Endothelial cell of umbilical vein (primary cell): ENCODE measurements at regions of chr22 and their contacts with region 1.

Region 1: DNA sequence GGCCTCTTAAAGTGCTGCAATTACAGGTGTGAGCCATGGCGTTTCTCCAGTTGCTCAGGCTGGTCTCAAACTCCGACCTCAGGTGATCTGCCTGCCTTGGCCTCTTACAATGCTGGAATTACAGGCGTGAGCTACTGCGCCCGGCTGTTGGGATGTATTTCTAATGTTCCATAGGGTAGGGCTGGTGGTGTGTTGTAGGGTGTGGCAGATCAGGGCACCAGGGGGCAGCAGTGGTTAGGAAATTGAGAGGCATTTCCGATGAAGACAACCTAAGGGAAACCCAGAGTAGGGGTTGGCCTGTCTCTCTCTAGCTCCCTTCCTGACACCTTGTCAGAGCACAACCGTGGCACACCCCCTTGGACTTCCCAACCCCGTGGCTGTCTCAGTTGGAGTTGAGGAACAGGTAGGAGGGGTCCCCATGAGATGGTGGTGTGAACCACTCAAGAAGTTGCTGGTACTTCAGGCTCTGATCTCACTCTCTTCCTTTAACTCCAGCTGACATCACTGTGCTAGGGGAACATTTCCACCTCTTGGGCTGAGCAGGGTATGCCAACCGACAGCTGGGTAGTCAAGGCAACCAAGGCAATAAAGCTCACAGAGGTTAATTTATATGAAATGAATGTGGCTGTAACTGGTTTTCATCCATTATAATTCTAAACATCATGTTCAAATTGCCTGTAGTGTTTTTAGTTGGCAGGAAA is 33.0 kb downstream of the YWHAH start:
- DNase-seq: peak; percentile 48
- H3K4me3 ChIP-seq: no peak overlapping the region
- H3K27ac ChIP-seq: no peak overlapping the region
- H3K4me1 ChIP-seq: no peaks in the 10 kb centered on the region
- H3K27me3 ChIP-seq: no peaks in the 10 kb centered on the region
- CTCF ChIP-seq: peak; percentile 72 to 74
- POLR2A ChIP-seq: no peak

Region 2: GRCh38 chr22:32080904-32081303 is 103.6 kb after region 1 on chr22:
- CTCF ChIA-PET with region 1: interaction called, 36 read pairs
- POLR2A ChIA-PET with region 1: no interaction called
- dilution Hi-C with region 1: no loop called
- intact Hi-C with region 1: loop called (anchors 1 kb)
- DNase-seq: peak; percentile 11
- H3K4me3 ChIP-seq: no peak overlapping the region
- H3K27ac ChIP-seq: no peak overlapping the region
- H3K4me1 ChIP-seq: no peaks in the 10 kb centered on the region
- H3K27me3 ChIP-seq: peaks cover 0 to 5% of the 10 kb centered on the region in 2 experiments
- CTCF ChIP-seq: peak; percentile 36 to 46
- POLR2A ChIP-seq: no peak

Region 3: DNA sequence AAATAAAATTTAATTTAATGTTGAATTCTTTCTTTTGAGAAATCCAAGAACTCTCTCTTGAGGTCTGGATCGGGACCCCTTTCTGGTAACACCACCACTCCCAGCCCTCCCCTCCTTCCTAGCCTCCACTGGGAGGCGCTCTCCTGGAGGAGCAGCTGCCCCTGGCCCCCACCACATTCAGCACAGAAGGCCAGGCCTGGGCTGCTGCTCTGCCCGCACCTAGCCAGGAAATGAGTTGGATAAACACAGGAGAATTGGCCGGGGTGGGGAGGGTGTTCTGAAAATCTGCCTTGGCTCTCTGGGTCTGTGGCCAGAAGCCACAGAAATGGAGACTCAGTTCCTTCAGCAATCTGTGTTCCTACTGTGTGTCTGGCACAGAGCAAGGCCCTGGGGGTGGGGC is 150.6 kb after region 1 on chr22:
- CTCF ChIA-PET with region 1: no interaction called
- POLR2A ChIA-PET with region 1: no interaction called
- dilution Hi-C with region 1: no loop called
- intact Hi-C with region 1: loop called (anchors 5 kb)
- DNase-seq: no peak
- H3K4me3 ChIP-seq: no peak overlapping the region
- H3K27ac ChIP-seq: no peak overlapping the region
- H3K4me1 ChIP-seq: no peaks in the 10 kb centered on the region
- H3K27me3 ChIP-seq: no peaks in the 10 kb centered on the region
- CTCF ChIP-seq: no peak
- POLR2A ChIP-seq: no peak

Region 4: GRCh38 chr22:32202539-32203180 is 225.4 kb after region 1 on chr22:
- CTCF ChIA-PET with region 1: no interaction called
- POLR2A ChIA-PET with region 1: no interaction called
- dilution Hi-C with region 1: no loop called
- intact Hi-C with region 1: loop called (anchors 5 kb)
- DNase-seq: peak; percentile 45
- H3K4me3 ChIP-seq: no peak overlapping the region
- H3K27ac ChIP-seq: no peak overlapping the region
- H3K4me1 ChIP-seq: no peaks in the 10 kb centered on the region
- H3K27me3 ChIP-seq: peaks cover 4 to 19% of the 10 kb centered on the region in 2 experiments
- CTCF ChIP-seq: peak; percentile 51 to 76
- POLR2A ChIP-seq: no peak

Region 5: GRCh38 chr22:32378707-32379272 is 401.5 kb after region 1 on chr22:
- CTCF ChIA-PET with region 1: interaction called, 8 read pairs
- POLR2A ChIA-PET with region 1: no interaction called
- dilution Hi-C with region 1: no loop called
- intact Hi-C with region 1: loop called (anchors 1 kb)
- DNase-seq: peak; percentile 62
- H3K4me3 ChIP-seq: no peak overlapping the region
- H3K27ac ChIP-seq: no peak overlapping the region
- H3K4me1 ChIP-seq: no peaks in the 10 kb centered on the region
- H3K27me3 ChIP-seq: peaks cover 0 to 2% of the 10 kb centered on the region in 2 experiments
- CTCF ChIP-seq: peak; percentile 92 to 97
- POLR2A ChIP-seq: no peak

Region 6: DNA sequence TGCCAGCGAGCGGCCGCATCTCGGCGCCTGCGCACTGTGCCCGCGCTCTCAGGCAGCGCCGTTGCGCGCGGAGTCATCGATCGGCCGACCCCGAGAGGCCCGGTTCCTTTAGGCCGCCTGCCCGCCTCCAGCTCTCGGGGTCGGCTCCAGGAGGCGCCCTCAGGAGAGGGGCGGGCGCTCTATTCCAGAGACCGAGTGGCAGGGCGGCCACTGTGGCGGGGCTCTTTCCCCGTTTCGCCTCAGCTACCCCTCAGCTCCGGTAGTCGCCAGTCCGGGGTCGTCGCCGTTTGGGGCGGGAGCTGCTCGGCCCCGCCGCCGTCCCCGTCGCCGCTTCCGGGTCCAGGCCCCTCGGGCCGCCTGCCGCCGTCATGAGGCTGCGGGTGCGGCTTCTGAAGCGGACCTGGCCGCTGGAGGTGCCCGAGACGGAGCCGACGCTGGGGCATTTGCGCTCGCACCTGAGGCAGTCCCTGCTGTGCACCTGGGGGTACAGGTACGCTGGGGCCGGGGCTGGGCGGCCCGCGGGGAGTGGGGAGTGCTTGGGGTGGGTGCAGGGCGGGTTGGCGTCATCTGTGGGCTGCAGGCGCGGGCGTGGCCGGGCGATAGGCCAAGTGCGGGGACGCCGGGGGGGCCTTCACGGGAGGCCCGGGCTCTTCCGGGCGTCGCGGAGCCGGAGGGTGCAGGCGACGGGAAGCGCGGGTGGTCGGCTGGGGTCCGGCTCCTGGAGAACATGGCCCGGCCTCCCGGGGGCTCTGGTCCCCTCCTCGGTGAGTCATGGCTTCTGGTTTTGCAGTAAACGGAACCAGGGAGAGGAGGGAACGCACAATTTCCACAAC is 497.6 kb after region 1 on chr22 and contains the start of gene FBXO7:
- CTCF ChIA-PET with region 1: interaction called, 4 read pairs
- POLR2A ChIA-PET with region 1: no interaction called
- dilution Hi-C with region 1: no loop called
- intact Hi-C with region 1: loop called (anchors 1 kb)
- DNase-seq: peak; percentile 92
- H3K4me3 ChIP-seq: peak within 1 kb of the TSS; percentile 77 to 88 (median 81)
- H3K27ac ChIP-seq: peak within 1 kb of the TSS; percentile 90
- H3K4me1 ChIP-seq: peaks cover 20% of the 10 kb centered on the region
- H3K27me3 ChIP-seq: no peaks in the 10 kb centered on the region
- CTCF ChIP-seq: peak in 1 of 2 donors; percentile 66
- POLR2A ChIP-seq: peak; percentile 20
- total RNA-seq, gene FBXO7: 79.0 and 81.1 TPM in 2 replicates

Region 7: DNA sequence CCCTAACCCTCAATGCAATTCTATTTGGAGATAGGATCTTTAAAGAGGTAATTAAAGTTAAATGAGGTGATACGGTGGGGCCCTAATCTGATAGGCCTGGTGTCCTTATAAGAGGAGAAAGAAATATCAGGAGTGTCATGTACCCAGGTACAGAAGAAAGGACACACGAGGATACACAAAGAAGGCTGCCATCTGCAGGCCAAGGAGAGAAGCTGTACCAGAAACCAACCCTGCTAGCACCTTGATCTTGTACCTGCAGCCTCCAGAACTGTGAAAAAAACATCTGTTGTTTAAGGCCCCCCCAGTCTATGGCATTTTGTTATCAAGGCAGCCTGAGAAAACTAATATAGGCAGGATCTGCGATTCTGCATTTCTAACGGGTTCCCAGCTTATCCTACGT is 541.6 kb after region 1 on chr22:
- CTCF ChIA-PET with region 1: interaction called, 4 read pairs
- POLR2A ChIA-PET with region 1: no interaction called
- dilution Hi-C with region 1: no loop called
- intact Hi-C with region 1: loop called (anchors 2 kb)
- DNase-seq: no peak
- H3K4me3 ChIP-seq: no peak overlapping the region
- H3K27ac ChIP-seq: no peak overlapping the region
- H3K4me1 ChIP-seq: no peaks in the 10 kb centered on the region
- H3K27me3 ChIP-seq: peaks cover 0 to 2% of the 10 kb centered on the region in 2 experiments
- CTCF ChIP-seq: peak in 1 of 2 donors; percentile 16
- POLR2A ChIP-seq: no peak